Activated CD8-positive, alpha-beta T cell treated with anti-CD3 and anti-CD28 coated beads, Interleukin-2, amount 10 ng/mL, durations not matched to agents 7 days and 5 days (primary cell): ENCODE measurements at regions of chr16 and their contacts with region 1.

Region 1: GRCh38 chr16:53054670-53055485 is at the start of gene CHD9:
- DNase-seq: peak; percentile 79
- ATAC-seq: peak; percentile 96
- H3K4me3 Mint-ChIP-seq: peak within 1 kb of the TSS; percentile 87
- H3K27ac Mint-ChIP-seq: peak within 1 kb of the TSS; percentile 89
- H3K4me1 Mint-ChIP-seq: peaks cover 54% of the 10 kb centered on the region
- H3K27me3 Mint-ChIP-seq: no peaks in the 10 kb centered on the region
- total RNA-seq, gene CHD9: 23.5 to 32.1 TPM

Region 2: GRCh38 chr16:52991572-52991971 is 63.3 kb before region 1 on chr16:
- CTCF ChIA-PET with region 1: no interaction called
- POLR2A ChIA-PET with region 1: no interaction called
- DNase-seq: no peak
- ATAC-seq: no peak
- H3K4me3 Mint-ChIP-seq: no peak overlapping the region
- H3K27ac Mint-ChIP-seq: no peak overlapping the region
- H3K4me1 Mint-ChIP-seq: no peaks in the 10 kb centered on the region
- H3K27me3 Mint-ChIP-seq: no peaks in the 10 kb centered on the region

Region 3: DNA sequence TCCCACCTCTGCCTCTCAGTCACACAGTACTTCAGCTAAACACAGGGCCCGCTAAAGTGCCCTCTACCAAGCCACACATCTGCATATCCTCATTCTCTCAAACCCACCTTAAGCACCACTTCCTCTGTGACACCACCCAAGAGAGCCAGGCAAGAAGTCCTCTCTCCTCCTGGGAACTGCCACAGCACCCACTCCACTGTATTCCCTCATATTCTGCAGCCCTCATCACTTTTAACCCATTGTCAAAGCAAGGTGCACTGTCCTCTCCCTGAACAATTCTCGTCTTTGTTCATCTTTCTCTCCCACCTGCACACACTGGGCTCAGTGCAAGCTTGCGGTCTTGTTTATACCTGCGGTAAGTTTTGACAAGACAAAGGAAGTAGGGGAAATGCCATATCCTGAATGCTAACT is 13.6 kb after region 1 on chr16:
- CTCF ChIA-PET with region 1: interaction called, 22 read pairs
- POLR2A ChIA-PET with region 1: interaction called, 3 read pairs
- DNase-seq: peak; percentile 70
- ATAC-seq: peak; percentile 82
- H3K4me3 Mint-ChIP-seq: peak overlapping the region; percentile 43
- H3K27ac Mint-ChIP-seq: peak overlapping the region; percentile 83
- H3K4me1 Mint-ChIP-seq: peaks cover 70% of the 10 kb centered on the region
- H3K27me3 Mint-ChIP-seq: no peaks in the 10 kb centered on the region

Region 4: DNA sequence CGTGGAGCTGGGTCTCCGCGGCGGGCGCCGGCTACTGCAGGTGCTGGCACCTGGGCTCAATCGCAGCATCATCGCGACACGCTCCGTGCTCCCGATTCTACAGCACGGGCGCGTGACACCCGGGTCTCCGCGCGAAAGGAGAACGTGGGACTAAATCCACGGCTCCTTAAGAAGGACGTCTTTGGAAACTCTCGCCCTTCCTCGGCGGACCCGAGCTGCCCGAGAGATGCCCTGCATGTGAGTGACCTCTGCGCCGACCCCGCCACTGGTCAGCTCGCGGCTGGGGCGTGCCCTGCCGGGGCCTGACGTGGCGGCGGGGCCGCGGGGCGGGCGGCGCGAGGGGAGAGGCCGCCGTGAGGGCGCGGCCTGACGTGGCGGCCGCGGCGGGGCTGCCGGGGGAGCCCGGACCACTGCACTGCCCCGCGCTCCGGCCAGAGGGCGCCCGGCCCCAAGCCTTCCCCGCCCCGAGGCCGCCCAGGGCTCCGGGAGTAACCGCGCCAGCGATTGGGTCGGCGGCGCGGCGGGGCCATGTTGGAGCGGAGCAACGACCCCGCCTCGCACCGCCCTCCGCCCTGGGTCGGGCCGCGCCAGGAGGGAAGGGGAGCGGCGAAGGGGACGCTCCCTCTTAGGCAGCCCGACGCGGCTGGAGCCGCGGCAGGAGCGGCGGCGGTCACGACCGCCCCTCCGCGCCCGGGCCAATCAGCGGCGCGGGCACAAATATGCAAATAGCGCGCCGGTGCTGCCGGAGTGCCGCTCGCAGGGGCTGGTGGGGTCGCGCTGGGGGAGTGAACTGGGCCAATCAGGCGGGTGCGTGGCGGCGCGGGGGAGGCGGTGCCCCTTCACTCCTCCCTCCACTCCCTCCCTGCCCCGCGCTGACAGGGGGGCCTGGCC is 75.5 kb after region 1 on chr16:
- CTCF ChIA-PET with region 1: interaction called, 19 read pairs
- POLR2A ChIA-PET with region 1: no interaction called
- DNase-seq: peak; percentile 96
- ATAC-seq: peak; percentile 95
- H3K4me3 Mint-ChIP-seq: peak overlapping the region; percentile 72
- H3K27ac Mint-ChIP-seq: peak overlapping the region; percentile 78
- H3K4me1 Mint-ChIP-seq: peaks cover 9% of the 10 kb centered on the region
- H3K27me3 Mint-ChIP-seq: no peaks in the 10 kb centered on the region

Region 5: GRCh38 chr16:53159781-53160436 is 105.0 kb after region 1 on chr16:
- CTCF ChIA-PET with region 1: interaction called, 16 read pairs
- POLR2A ChIA-PET with region 1: no interaction called
- DNase-seq: peak; percentile 48
- ATAC-seq: peak; percentile 80
- H3K4me3 Mint-ChIP-seq: no peak overlapping the region
- H3K27ac Mint-ChIP-seq: no peak overlapping the region
- H3K4me1 Mint-ChIP-seq: no peaks in the 10 kb centered on the region
- H3K27me3 Mint-ChIP-seq: no peaks in the 10 kb centered on the region

Region 6: DNA sequence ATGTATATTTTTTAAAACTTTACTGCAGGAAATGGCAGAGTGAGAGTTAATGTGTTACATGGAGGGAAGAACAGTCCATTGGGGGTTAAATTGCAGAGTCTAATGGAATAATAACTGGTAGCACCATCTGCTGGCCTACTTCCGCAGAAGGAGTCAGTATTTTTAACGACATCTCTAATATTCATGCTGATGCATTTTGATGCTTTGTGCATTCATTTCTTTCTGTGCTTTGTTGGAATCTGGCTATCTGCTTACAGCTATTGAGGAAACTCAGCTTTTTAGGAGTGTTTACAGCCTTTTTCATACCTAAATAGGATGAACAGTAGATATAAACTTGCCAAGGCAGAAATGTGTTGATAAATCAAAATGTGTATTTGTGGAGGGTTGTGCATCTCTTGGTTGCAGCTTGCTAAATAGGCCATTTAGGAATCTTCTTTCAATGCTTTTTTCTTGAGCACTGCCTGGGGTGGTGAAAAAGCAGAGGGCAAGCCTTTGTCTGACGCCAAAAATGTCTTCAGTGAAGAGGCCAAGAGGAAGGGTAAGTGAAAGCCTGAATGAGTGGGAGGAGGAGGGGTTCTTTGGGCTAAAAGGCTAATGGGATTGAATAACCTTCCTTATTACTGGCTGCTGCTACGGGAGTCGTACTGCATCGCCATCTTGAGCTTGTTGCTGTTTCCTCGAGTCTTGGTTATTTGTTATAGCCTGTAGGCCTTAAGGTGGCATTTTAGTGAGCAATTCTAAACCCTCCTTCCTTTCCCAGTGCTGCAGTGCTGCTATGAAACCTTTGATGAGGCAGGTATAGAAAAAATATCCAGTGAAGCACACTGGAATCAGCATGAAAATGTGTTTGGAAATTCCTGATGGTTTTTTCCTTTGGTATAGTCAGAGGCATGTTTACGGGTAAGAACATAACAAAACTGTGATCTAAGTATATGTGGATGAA is 153.2 kb after region 1 on chr16:
- CTCF ChIA-PET with region 1: interaction called, 24 read pairs
- POLR2A ChIA-PET with region 1: no interaction called
- DNase-seq: peak; percentile 25
- ATAC-seq: peak; percentile 55
- H3K4me3 Mint-ChIP-seq: peak overlapping the region; percentile 64
- H3K27ac Mint-ChIP-seq: peak overlapping the region; percentile 77
- H3K4me1 Mint-ChIP-seq: peaks cover 12% of the 10 kb centered on the region
- H3K27me3 Mint-ChIP-seq: no peaks in the 10 kb centered on the region